Calu3 (cell line): ENCODE measurements at regions of chr5 and their contacts with region 1.

Region 1: DNA sequence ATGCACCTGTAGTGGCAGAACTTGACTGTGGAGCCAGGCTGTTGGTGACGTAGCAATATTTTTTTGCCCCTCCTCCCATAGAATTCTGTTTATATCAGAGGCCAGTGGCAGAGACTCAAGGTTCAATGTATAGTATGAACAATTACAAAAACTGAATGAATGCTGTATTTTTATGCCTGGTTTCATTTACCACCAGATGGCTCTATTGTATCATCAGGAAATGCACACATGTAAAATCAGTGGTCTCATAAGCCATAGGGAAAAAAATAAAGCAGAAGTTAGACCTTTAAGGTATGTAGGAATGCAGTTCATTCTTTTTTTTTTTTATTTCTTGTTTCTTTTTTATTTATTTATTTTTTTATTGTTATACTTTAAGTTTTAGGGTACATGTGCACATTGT is 43.6 kb downstream of the CCDC192 start:
- DNase-seq: no peak
- H3K4me3 Mint-ChIP-seq: no peak overlapping the region
- H3K27ac Mint-ChIP-seq: no peak overlapping the region
- H3K4me1 Mint-ChIP-seq: no peaks in the 10 kb centered on the region
- H3K27me3 Mint-ChIP-seq: no peaks in the 10 kb centered on the region
- CTCF ChIP-seq: peak; percentile 61

Region 2: DNA sequence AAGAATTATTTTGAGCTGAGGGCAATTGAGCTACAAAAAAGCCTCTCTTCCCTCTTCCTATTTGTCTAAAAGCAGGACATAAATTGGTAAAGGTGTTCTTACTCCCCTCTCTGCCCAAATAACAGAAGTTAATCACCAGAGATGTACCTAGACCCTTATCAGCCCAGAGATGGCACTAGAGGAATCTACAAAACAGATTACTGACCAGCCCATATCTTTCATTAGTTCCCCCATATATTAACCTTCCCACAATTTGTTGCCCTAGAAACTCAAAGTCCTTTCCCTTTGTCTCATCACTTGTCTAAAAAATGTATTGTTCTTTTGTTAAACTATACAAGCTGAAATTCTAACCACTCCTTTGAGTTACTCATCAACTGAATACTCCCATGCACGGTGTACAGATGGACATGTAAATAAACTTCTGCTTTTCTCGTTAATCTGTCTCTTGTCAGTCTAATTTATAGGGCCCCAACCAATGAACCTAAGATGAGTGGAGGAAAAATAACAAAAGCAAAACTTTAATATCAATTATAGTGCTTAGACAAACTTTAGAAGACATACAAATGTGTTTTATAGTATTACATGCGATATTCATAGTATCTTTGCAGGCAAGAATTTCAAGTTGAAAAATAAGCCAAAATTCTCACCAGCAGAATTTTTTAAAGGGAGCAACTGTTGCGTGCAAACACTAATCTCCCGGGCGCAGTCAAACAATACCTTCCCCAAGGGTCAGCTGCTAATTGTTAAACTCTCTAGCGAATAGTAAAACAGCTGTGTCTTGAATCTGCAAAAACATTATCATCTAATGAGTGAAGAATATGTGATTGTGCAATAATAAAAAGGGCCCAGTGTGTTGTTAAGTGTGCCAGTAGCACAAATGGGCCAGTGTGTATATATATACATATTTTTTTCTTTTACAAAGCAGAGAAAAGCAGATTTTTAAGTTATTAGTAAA is 87.5 kb after region 1 on chr5:
- CTCF ChIA-PET with region 1: no interaction called
- intact Hi-C with region 1: no loop called
- DNase-seq: no peak
- H3K4me3 Mint-ChIP-seq: no peak overlapping the region
- H3K27ac Mint-ChIP-seq: no peak overlapping the region
- H3K4me1 Mint-ChIP-seq: peaks cover 23% of the 10 kb centered on the region
- H3K27me3 Mint-ChIP-seq: no peaks in the 10 kb centered on the region
- CTCF ChIP-seq: no peak

Region 3: DNA sequence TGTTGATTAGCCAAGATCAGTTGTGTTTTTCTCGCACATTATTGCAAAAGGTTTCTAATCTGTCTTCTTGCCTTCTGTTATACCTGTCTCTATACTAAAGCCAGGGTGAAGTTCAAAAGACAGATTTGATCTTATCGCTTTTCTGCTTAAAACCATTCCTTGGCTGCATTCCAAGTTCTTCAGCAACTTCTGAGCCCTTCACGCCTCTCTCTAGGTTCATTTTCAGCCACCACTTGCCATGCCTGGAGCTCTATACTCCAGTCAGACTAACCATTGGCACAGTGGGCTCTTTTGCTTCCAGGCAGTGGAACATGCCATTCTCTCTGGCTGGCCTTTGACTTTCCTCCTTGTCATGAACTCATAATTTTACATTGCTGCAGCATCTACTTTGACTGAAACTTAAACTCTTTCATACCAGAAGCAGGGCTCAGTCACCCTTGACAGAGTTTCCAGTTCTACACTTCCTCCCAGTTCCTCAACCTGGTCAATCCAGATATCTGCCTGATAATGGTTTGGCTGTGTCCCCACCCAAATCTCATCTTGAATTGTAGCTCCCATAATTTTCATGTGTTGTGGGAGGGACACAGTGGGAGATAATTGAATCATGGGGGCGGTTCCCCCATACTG is 451.3 kb after region 1 on chr5:
- CTCF ChIA-PET with region 1: no interaction called
- intact Hi-C with region 1: loop called (anchors 2 kb)
- DNase-seq: no peak
- H3K4me3 Mint-ChIP-seq: peak overlapping the region; percentile 48
- H3K27ac Mint-ChIP-seq: peak overlapping the region; percentile 78
- H3K4me1 Mint-ChIP-seq: peaks cover 45% of the 10 kb centered on the region
- H3K27me3 Mint-ChIP-seq: no peaks in the 10 kb centered on the region
- CTCF ChIP-seq: no peak

Region 4: DNA sequence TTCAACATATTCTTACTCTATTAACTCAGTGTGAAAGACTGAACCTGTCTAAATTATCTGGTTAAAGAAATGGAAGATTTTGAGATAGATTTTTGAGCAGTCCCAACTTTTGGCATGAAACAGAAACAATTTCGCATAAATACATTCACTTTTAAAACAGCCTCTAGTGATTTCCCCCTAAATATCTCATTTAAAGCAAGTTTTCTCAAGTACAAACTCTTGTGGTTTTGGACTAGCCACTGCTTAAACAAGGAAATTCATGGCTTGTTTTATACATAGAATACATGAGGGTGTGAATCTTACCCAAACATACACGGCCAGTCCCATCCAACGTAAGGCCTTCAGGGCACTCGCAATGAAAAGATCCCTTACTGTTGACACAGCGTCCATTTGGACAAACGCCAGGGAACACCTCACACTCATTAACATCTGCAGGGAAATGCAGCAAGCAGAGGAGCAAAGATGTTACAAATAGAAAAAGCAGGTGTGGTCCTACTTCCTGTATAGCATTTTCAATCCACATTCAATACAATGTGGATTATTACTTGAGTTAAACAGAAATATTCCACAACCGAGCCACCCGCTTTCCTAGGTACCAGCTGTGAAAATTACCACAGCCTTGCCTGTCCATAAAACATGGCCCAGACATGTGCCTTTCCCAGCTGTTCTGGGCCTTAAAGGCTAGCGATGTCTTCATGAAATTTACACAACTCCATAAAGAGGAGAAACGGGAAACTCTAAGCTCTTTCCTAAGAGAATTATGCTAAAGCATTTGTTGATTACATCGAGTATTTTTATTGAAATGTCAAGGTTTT is 602.5 kb after region 1 on chr5:
- CTCF ChIA-PET with region 1: no interaction called
- intact Hi-C with region 1: loop called (anchors 10 kb)
- DNase-seq: peak; percentile 64
- H3K4me3 Mint-ChIP-seq: no peak overlapping the region
- H3K27ac Mint-ChIP-seq: peak overlapping the region; percentile 62
- H3K4me1 Mint-ChIP-seq: peaks cover 8% of the 10 kb centered on the region
- H3K27me3 Mint-ChIP-seq: no peaks in the 10 kb centered on the region
- CTCF ChIP-seq: no peak

Region 5: DNA sequence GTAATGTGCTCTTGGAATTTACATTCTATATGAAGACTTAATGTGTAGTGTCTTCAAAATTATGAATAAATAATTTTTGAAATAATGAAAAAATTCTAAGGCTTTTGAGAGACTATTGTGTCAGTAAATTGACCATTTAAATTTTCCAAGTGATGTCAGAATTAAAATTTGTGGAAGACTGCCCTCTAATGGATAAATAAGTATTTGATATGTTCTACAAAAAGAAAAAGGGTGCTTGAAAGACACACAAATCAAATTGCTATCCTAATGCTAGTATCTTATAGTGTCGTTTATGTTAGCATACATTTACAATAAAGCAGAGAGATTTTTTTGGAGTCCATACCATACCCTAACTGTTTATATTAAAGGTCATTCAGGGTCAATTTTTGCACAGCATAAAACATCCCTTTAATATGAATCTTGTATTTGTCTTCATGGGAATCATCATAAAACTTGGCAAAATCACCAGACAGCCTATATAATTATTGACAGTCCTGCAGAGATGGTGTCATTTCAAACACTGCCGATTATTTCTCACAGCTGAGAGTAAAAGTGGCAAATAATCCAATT is 1097.7 kb after region 1 on chr5:
- CTCF ChIA-PET with region 1: no interaction called
- intact Hi-C with region 1: loop called (anchors 5 kb)
- DNase-seq: no peak
- H3K4me3 Mint-ChIP-seq: no peak overlapping the region
- H3K27ac Mint-ChIP-seq: no peak overlapping the region
- H3K4me1 Mint-ChIP-seq: no peaks in the 10 kb centered on the region
- H3K27me3 Mint-ChIP-seq: no peaks in the 10 kb centered on the region
- CTCF ChIP-seq: no peak